Natural killer cell (primary cell): ENCODE measurements at regions of chr17 and their contacts with region 1.

Region 1: DNA sequence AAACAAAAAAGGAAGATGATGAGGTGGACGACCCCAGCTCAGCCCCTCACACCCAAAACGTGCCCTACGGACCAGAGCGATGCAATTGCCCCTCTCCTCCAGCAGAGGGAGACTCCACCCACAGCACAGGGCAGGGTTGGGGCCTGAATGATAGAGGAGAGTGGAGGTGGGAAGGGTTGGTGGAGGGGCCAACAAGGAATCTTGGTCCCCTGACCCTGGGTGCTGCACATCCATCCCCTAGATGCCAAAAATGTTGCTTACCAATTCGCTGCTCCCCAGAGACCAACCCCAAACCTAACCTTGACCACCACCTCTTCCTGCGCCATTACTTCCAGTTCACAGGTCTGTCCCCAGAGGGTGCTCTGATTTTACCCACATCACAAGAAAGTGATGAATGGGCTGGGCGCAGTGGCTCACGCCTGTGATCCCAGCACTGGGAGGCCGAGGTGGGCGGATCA is 12.9 kb downstream of the P2RX5 start:
- DNase-seq: peak; percentile 46 to 82
- ATAC-seq: peak; percentile 92 to 99 (median 94)
- H3K4me3 ChIP-seq: no peak overlapping the region
- H3K4me3 Mint-ChIP-seq: no peak overlapping the region
- H3K27ac ChIP-seq: no peak overlapping the region
- H3K27ac Mint-ChIP-seq: peak overlapping the region in 1 of 2 donors; percentile 42
- H3K4me1 ChIP-seq: peaks cover 20% of the 10 kb centered on the region
- H3K4me1 Mint-ChIP-seq: peaks cover 0 to 6% of the 10 kb centered on the region in 2 donors
- H3K27me3 ChIP-seq: no peaks in the 10 kb centered on the region
- H3K27me3 Mint-ChIP-seq: no peaks in the 10 kb centered on the region
- CTCF ChIP-seq: peak; percentile 96

Region 2: GRCh38 chr17:3827124-3827773 is 144.2 kb after region 1 on chr17:
- intact Hi-C with region 1: loop called (anchors 2 kb)
- DNase-seq: peak; percentile 54 to 87
- ATAC-seq: peak; percentile 73 to 79 (median 74)
- H3K4me3 ChIP-seq: no peak overlapping the region
- H3K4me3 Mint-ChIP-seq: no peak overlapping the region
- H3K27ac ChIP-seq: no peak overlapping the region
- H3K27ac Mint-ChIP-seq: peak overlapping the region in 1 of 2 donors; percentile 11
- H3K4me1 ChIP-seq: no peaks in the 10 kb centered on the region
- H3K4me1 Mint-ChIP-seq: peaks cover 7% of the 10 kb centered on the region in 2 donors
- H3K27me3 ChIP-seq: no peaks in the 10 kb centered on the region
- H3K27me3 Mint-ChIP-seq: no peaks in the 10 kb centered on the region
- CTCF ChIP-seq: peak; percentile 92